ENCODE measurements at regions of chr1 and their contacts with region 1.

Region 1: DNA sequence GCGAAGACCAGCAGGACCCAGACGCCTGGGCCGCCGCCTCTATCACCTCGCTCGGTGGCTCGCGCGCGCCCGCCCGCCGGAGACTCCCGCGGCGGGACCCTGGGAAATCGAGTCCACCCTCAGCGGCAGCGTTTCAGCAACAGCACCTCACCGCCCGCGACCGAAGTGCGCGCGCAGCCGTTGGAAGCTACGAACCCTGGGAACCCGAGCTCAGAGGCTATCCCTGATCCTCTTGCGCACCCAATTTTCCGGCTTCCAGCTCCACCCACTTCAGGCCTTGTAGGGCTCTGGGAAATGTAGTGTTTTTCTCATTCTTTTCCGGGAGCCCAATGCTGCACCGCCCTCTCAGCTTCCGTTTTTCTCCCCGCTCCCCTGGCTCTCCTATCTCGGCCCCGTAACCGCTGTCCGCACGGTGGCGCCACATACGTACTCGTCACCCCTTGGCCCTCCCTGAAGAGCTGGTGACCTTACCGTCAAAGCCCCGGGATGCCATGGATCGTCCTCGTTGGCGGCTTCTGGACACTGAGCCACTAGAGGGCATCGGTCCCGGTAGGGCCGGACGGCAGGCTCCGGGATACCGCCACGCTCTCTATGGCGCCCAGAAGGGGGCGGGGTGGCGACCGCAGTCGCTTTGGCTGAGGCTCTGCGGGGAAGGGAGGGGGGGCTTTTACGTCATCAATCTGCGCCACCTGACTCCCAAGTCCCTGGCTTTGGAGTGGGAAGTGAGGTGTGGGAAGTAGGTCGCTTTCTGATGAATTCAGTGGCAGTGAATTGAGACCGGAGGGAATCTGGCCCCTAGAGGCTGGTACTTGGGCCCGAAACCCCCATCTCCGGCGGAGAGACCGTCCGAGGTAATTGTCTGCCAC is at the starts of genes ODR4 and TPR:
- DNase-seq: peak; percentile 97 to 100
- ATAC-seq: peak; percentile 92 to 96
- H3K4me3 ChIP-seq: peak within 1 kb of the TSS; percentile 92
- H3K27ac ChIP-seq: peak within 1 kb of the TSS; percentile 82 to 93
- H3K4me1 ChIP-seq: peaks cover 26% of the 10 kb centered on the region; the same call in 2 of the 3 replicates
- CTCF ChIP-seq: peak; percentile 98
- EP300 ChIP-seq: no peak
- POLR2A ChIP-seq: peak; percentile 87
- RAD21 ChIP-seq: peak; percentile 49 to 74
- polyA plus RNA-seq, gene ODR4: 25.2 and 34.9 TPM in 2 replicates
- polyA plus RNA-seq, gene TPR: 93.2 and 138 TPM in 2 replicates

Region 2: GRCh38 chr1:186102557-186103148 is 272.7 kb before region 1 on chr1:
- CTCF ChIA-PET with region 1: no interaction called
- POLR2A ChIA-PET with region 1: no interaction called
- DNase-seq: no peak
- ATAC-seq: no peak
- H3K4me3 ChIP-seq: no peak overlapping the region
- H3K27ac ChIP-seq: no peak overlapping the region
- H3K4me1 ChIP-seq: no peaks in the 10 kb centered on the region
- CTCF ChIP-seq: no peak
- EP300 ChIP-seq: no peak
- POLR2A ChIP-seq: no peak
- RAD21 ChIP-seq: no peak

Region 3: GRCh38 chr1:186208405-186209129 is 166.8 kb before region 1 on chr1:
- CTCF ChIA-PET with region 1: no interaction called
- POLR2A ChIA-PET with region 1: no interaction called
- DNase-seq: no peak
- ATAC-seq: no peak
- H3K4me3 ChIP-seq: no peak overlapping the region
- H3K27ac ChIP-seq: no peak overlapping the region
- H3K4me1 ChIP-seq: no peaks in the 10 kb centered on the region; the same call in 2 of the 3 replicates
- CTCF ChIP-seq: no peak
- EP300 ChIP-seq: no peak
- POLR2A ChIP-seq: no peak
- RAD21 ChIP-seq: no peak

Region 4: DNA sequence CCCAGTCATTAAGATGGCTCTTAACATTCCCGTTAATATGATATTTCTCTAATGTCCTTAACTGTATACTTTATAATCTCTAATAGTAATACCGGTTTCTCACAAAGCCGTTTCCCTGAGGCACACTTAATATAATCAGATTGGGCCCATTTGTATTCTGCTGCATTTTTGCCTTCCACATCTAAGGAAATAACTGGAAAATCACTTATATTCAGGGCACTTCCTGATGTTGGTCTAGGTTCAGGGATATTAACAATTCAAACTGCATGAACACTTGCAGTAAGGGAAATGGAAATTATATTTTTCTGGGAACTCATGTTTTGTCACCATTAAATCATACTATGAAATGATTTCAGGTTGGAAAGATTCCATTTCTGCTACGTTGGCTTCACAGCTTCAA is 120.1 kb before region 1 on chr1:
- CTCF ChIA-PET with region 1: no interaction called
- POLR2A ChIA-PET with region 1: no interaction called
- DNase-seq: no peak
- ATAC-seq: no peak
- H3K4me3 ChIP-seq: no peak overlapping the region
- H3K27ac ChIP-seq: no peak overlapping the region
- H3K4me1 ChIP-seq: no peaks in the 10 kb centered on the region
- CTCF ChIP-seq: no peak
- EP300 ChIP-seq: no peak
- POLR2A ChIP-seq: no peak
- RAD21 ChIP-seq: no peak

Region 5: DNA sequence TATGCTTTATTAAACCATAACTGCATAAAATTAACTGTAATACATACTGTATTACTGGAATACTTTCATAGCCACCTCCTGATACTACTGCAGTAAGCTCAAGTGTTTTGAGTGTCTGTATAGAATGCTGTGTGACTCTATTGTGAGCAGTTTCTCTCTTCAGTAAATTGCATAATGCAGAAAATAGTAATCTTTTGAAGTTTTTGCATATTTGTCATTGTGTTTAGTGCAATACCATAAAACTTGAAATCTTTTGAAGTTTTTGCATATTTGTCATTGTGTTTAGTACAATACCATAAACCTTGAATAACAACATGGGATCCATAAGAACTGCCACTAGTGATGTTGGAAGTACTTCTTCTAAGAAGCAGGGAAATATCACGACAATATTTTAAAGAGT is 11.4 kb before region 1 on chr1:
- CTCF ChIA-PET with region 1: interaction called, 16 read pairs
- POLR2A ChIA-PET with region 1: interaction called, 7 read pairs
- DNase-seq: no peak
- ATAC-seq: no peak
- H3K4me3 ChIP-seq: no peak overlapping the region
- H3K27ac ChIP-seq: no peak overlapping the region
- H3K4me1 ChIP-seq: no peaks in the 10 kb centered on the region
- CTCF ChIP-seq: no peak
- EP300 ChIP-seq: no peak
- POLR2A ChIP-seq: no peak
- RAD21 ChIP-seq: no peak

Region 6: GRCh38 chr1:186386725-186387383 is 11.5 kb after region 1 on chr1:
- CTCF ChIA-PET with region 1: interaction called, 18 read pairs
- POLR2A ChIA-PET with region 1: interaction called, 3 read pairs
- DNase-seq: no peak
- ATAC-seq: no peak
- H3K4me3 ChIP-seq: no peak overlapping the region
- H3K27ac ChIP-seq: no peak overlapping the region
- H3K4me1 ChIP-seq: no peaks in the 10 kb centered on the region
- CTCF ChIP-seq: no peak
- EP300 ChIP-seq: no peak
- POLR2A ChIP-seq: no peak
- RAD21 ChIP-seq: no peak

Region 7: GRCh38 chr1:186404454-186405051 is 29.2 kb after region 1 on chr1:
- CTCF ChIA-PET with region 1: interaction called, 11 read pairs
- POLR2A ChIA-PET with region 1: interaction called, 4 read pairs
- DNase-seq: peak; percentile 43 to 61
- ATAC-seq: peak; percentile 39 to 63; a peak in 3 of 6 replicates
- H3K4me3 ChIP-seq: no peak overlapping the region
- H3K27ac ChIP-seq: no peak overlapping the region
- H3K4me1 ChIP-seq: no peaks in the 10 kb centered on the region
- CTCF ChIP-seq: peak; percentile 80
- EP300 ChIP-seq: no peak
- POLR2A ChIP-seq: no peak
- RAD21 ChIP-seq: peak; percentile 77 to 81